Heart right ventricle (tissue), 16 donors: ENCODE measurements at regions of chr16 and their contacts with region 1.

Region 1: DNA sequence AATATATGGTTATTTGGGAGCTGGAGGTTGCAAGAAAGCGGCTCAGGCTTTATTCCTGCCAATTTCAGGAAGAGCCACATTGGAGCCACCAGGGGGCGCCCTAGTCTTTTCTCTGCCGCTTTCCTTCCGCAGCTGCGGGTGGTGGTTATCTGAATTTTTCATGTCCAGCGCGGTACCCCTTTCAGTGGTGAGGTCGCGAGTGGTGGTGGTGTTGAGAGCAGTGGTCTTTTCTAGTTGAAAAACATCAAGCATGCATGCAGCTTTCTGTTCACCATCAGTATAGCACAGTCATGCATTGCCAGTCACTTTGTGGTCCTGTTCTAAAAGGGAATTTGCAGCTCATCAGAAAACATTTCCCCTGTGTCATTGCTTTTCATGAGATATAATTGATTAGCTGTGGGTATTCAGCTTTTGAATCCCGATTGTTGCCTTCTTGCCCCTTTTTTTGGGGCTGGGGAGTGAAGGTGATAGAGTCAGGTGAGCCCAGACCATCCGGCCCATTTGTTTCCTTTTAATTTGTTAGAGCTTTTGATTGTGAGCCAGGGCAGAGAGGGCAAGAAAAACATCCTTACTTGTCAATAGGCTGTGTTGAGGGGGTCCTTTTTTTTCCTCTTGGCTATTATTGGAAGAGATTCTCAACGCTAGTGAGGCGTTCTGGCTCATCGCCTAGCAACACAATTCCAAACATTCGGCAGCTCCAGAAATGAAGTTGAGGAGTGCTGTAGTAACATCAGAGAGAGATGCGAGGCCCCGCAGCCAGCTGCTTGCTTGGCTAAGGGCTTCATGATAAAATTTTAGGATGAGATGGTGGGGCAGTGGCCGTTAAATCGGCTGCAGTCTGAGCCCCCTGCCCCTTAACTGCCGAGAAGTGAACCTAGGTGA is 119.0 kb downstream of the SNX29 start:
- DNase-seq: peak; percentile 65 to 69
- ATAC-seq: peak; percentile 40 to 73 (median 56)
- H3K4me3 ChIP-seq: peak overlapping the region in 7 of 10 donors; percentile 2 to 46 (median 33)
- H3K27ac ChIP-seq: peak overlapping the region in 3 of 10 donors; percentile 23 to 66 (median 29)
- H3K4me1 ChIP-seq: peaks cover 23 to 54% (median 43%) of the 10 kb centered on the region in 9 donors
- H3K27me3 ChIP-seq: no peaks in the 10 kb centered on the region
- CTCF ChIP-seq: peak in 8 of 9 donors; percentile 79 to 94 (median 94)

Region 2: DNA sequence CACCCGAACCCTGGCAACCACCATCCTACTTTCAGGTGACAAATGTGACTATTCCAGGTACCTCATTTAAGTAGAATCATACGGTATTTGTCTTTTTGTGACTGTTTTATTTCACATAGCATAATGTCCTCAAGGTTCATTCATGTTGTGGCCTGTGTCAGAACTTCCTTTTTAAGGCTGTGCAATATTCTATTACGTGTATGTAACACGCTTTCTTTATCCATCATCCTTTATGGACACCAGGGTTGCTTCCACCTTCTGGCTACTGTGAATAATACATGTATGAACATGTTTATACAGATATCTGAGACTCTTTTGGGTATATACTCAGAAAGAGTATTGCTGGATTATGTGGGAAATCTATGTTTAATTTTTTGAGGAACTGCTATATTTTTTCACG is 215.5 kb before region 1 on chr16:
- intact Hi-C with region 1: no loop called
- DNase-seq: no peak
- ATAC-seq: no peak
- H3K4me3 ChIP-seq: no peak overlapping the region
- H3K27ac ChIP-seq: no peak overlapping the region
- H3K4me1 ChIP-seq: peaks cover 0 to 19% (median 0%) of the 10 kb centered on the region in 9 donors
- H3K27me3 ChIP-seq: no peaks in the 10 kb centered on the region
- CTCF ChIP-seq: no peak

Region 3: GRCh38 chr16:12147681-12148080 is 52.2 kb after region 1 on chr16:
- intact Hi-C with region 1: loop called in 1 of 10 experiments (anchors 10 kb)
- DNase-seq: peak in 1 of 2 donors; percentile 25
- ATAC-seq: peak; percentile 43 to 92 (median 82)
- H3K4me3 ChIP-seq: peak overlapping the region in 5 of 10 donors; percentile 6 to 23 (median 15)
- H3K27ac ChIP-seq: peak overlapping the region in 9 of 10 donors; percentile 34 to 77 (median 60)
- H3K4me1 ChIP-seq: peaks cover 3 to 24% (median 15%) of the 10 kb centered on the region in 9 donors
- H3K27me3 ChIP-seq: no peaks in the 10 kb centered on the region
- CTCF ChIP-seq: peak in 2 of 9 donors; percentile 10 to 29

Region 4: DNA sequence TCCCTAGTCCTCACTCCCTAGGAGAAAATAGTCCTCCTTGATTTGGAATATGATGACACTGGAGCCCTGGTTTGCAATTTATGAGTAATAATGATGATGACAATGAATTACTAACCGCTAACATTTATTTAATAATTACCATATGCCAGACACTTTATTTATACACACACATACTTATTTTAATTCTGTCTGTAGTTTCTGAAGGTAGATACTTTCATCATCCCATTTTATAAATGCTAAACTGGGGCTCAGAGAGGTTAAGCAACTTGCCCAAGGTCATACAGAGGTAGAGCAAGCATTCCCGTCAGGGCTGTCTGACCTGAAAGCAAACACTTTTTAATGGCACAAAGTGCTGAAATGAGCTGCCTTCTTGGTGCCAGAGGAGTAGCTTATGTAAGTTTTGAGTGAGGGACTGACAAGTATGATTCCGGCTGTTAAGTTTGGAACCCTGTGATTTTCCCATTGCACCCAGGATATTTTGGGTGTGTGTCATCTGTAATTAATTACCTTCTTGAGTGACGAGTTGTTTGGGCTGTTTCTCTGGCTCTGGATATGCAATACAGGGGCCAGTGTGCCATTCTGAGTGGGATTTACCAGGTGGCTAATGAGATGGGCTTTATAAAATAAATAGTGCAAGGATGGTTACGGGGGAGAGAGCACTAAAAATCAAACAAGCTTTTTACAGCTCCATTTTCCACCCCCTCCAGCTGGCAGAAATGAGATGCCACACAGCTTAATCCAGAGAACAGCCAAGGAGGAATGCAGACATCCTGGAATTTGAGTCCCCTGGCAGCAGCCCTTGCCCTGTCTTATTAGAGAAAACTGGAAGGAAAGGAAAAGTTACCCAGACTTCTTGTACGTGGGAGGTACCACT is 92.8 kb after region 1 on chr16:
- intact Hi-C with region 1: no loop called
- DNase-seq: no peak
- ATAC-seq: peak in 1 of 8 donors; percentile 18
- H3K4me3 ChIP-seq: no peak overlapping the region
- H3K27ac ChIP-seq: no peak overlapping the region
- H3K4me1 ChIP-seq: peaks cover 0 to 14% (median 7%) of the 10 kb centered on the region in 9 donors
- H3K27me3 ChIP-seq: no peaks in the 10 kb centered on the region
- CTCF ChIP-seq: no peak

Region 5: DNA sequence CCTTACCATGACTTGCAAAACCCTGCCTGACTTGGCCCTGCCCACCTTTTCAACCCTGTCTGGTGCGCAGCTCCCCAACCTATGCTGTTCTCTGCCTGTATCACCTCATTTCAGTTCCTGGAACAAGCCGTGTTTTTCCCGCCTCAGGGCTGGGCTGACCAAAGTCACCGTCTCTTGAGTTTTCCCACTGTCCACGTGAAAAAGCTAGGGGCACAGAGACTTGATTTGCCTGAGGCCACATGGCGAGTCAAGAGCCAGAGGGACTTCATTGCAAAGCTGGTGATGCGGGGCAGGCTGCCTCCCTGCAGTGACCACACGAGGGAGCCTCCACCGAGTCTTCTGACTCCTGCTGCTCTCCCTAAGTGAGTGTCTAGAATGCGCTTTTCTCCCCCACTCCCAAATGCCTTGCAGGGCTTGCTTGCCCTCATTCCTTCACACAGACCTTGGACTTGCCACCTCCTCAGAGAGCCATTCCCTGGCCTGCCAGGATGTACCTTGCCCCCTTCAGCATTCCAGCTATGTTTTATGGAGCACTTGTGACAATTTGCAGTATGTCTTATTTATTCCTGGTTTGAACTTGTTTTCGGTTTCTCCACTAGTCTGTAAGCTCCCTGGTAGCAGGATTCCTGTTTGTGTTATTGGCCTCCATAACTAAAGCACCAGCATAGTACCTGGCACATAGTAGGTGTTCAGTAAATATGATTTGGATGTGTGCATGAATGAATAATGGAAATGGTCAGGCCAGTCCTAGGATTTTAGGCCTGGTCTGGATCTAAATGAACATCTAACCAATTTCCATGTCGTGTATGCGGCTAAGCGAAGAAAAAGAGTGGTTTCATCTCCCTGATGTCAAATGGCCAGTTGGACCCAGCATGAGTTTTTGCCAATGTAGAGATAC is 133.3 kb after region 1 on chr16:
- intact Hi-C with region 1: loop called in 1 of 10 experiments (anchors 10 kb)
- DNase-seq: peak; percentile 29 to 39
- ATAC-seq: peak; percentile 51 to 83 (median 75)
- H3K4me3 ChIP-seq: no peak overlapping the region
- H3K27ac ChIP-seq: no peak overlapping the region
- H3K4me1 ChIP-seq: peaks cover 0 to 9% (median 0%) of the 10 kb centered on the region in 9 donors
- H3K27me3 ChIP-seq: no peaks in the 10 kb centered on the region
- CTCF ChIP-seq: peak; percentile 40 to 74 (median 64)

Region 6: GRCh38 chr16:12257926-12258561 is 162.5 kb after region 1 on chr16:
- intact Hi-C with region 1: loop called in 3 of 10 experiments (anchors 10 kb)
- DNase-seq: no peak
- ATAC-seq: peak in 5 of 8 donors; percentile 13 to 56 (median 36)
- H3K4me3 ChIP-seq: no peak overlapping the region
- H3K27ac ChIP-seq: no peak overlapping the region
- H3K4me1 ChIP-seq: peaks cover 0 to 5% (median 0%) of the 10 kb centered on the region in 9 donors
- H3K27me3 ChIP-seq: no peaks in the 10 kb centered on the region
- CTCF ChIP-seq: peak in 5 of 9 donors; percentile 8 to 36 (median 23)

Region 7: GRCh38 chr16:12330946-12331345 is 235.4 kb after region 1 on chr16:
- intact Hi-C with region 1: loop called in 2 of 10 experiments (anchors 10 kb)
- DNase-seq: peak; percentile 49 to 56
- ATAC-seq: peak; percentile 59 to 87 (median 74)
- H3K4me3 ChIP-seq: no peak overlapping the region
- H3K27ac ChIP-seq: peak overlapping the region in 8 of 10 donors; percentile 21 to 80 (median 46)
- H3K4me1 ChIP-seq: peaks cover 0 to 40% (median 26%) of the 10 kb centered on the region in 9 donors
- H3K27me3 ChIP-seq: no peaks in the 10 kb centered on the region
- CTCF ChIP-seq: no peak

Region 8: DNA sequence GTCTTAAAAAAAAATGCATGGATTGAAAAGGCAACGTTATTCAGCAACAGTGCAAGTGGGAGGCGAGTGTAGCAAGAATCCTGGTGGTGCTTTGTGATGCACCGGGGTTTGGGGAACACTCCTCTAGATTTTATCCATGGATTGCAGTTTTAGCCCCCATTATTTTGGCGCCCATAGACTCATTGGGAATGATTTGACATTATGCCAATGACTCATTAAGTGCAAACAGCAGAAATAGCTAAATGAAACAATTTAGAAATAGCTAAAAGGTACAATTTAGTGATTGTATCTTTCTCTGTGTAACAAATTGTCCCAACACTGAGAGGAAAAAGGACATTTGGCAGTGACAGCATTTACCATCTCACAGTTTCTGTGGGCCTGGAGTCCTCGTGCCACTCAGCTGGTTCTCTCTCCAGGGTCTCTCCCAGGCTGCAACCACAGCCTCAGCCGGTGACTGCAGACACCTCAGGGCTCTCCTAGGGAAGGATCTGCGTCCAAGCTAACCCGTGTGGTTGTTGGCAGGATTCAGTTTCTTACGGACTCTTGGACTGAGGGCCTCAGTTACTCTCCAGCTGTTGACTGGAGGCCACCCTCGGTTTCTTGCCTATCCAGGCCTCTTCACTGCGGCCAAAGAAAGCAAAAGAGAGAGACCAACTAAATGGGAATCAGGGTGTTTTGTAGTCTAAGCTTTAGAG is 279.7 kb after region 1 on chr16:
- intact Hi-C with region 1: no loop called
- DNase-seq: no peak
- ATAC-seq: peak in 7 of 8 donors; percentile 21 to 90 (median 52)
- H3K4me3 ChIP-seq: no peak overlapping the region
- H3K27ac ChIP-seq: no peak overlapping the region
- H3K4me1 ChIP-seq: peaks cover 0 to 10% (median 0%) of the 10 kb centered on the region in 9 donors
- H3K27me3 ChIP-seq: no peaks in the 10 kb centered on the region
- CTCF ChIP-seq: no peak

Region 9: GRCh38 chr16:12819126-12820117 is 723.9 kb after region 1 on chr16:
- intact Hi-C with region 1: loop called in 5 of 10 experiments (anchors 5 to 10 kb)
- DNase-seq: peak; percentile 59 to 77
- ATAC-seq: peak in 6 of 8 donors; percentile 13 to 64 (median 42)
- H3K4me3 ChIP-seq: no peak overlapping the region
- H3K27ac ChIP-seq: no peak overlapping the region
- H3K4me1 ChIP-seq: peaks cover 0 to 18% (median 0%) of the 10 kb centered on the region in 9 donors
- H3K27me3 ChIP-seq: no peaks in the 10 kb centered on the region
- CTCF ChIP-seq: peak; percentile 70 to 91 (median 82)